Tibial artery (tissue), 4 donors: ENCODE measurements at regions of chr10 and their contacts with region 1.

Region 1: DNA sequence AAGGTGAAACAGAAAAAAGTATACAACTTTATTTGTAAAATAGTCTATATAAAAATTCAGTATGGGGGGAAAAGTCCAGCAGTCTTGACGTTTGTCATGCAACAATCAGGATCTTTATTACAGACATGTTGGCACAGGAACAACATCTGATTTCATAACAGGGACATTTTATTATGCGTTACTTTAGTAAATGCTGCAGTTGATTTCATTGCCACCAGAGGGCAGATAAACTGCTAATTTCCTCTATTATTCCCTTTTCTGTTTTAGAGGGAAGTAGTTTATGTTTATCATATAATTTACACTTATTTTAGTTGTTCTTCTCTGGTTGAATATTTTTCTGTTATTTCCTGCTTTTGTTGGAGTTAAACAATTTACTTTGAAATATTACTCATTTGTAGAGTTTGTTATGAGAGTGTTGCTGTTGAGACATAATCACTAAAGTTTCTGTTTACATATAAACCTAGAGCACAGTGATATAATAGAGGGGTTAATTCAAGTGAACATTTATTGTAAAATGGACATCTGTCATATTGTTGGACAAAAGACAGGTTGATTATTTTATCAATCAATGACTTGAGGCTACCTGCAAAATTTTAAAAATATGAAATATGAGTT is 3.3 kb downstream of the PLXDC2 start:
- DNase-seq: peak in 1 of 2 donors; percentile 59
- H3K4me3 ChIP-seq: peak overlapping the region; percentile 69 to 77
- H3K27ac ChIP-seq: peak overlapping the region; percentile 84 to 86
- H3K4me1 ChIP-seq: peaks cover 0 to 51% (median 3%) of the 10 kb centered on the region in 4 donors
- H3K27me3 ChIP-seq: no peaks in the 10 kb centered on the region
- CTCF ChIP-seq: peak; percentile 82 to 85

Region 2: GRCh38 chr10:19629567-19629966 is 190.0 kb before region 1 on chr10:
- intact Hi-C with region 1: loop called (anchors 10 kb)
- DNase-seq: peak; percentile 83 to 91
- H3K4me3 ChIP-seq: no peak overlapping the region
- H3K27ac ChIP-seq: peak overlapping the region; percentile 43 to 73
- H3K4me1 ChIP-seq: peaks cover 0 to 80% (median 9%) of the 10 kb centered on the region in 4 donors
- H3K27me3 ChIP-seq: no peaks in the 10 kb centered on the region
- CTCF ChIP-seq: peak in 1 of 2 experiments; percentile 27

Region 3: DNA sequence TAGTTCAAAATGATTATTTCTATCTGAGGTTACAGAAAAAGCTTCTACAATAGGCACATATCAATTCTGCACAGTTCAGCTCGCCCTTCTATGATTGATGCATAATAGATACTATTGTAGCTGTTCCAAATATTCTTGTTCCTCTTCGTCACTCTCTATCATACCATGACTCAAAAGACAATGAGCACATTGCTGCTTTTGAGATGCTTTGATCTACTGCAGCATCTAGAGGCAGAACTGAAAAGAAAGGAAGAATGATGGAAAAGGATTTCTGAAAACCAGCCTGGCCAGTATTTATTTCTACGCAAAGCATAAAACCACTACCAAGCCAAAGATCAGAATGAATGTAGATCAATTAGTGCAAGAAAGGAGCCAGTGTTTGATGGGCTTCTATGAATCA is 62.6 kb before region 1 on chr10:
- intact Hi-C with region 1: no loop called
- DNase-seq: no peak
- H3K4me3 ChIP-seq: no peak overlapping the region
- H3K27ac ChIP-seq: no peak overlapping the region
- H3K4me1 ChIP-seq: no peaks in the 10 kb centered on the region
- H3K27me3 ChIP-seq: no peaks in the 10 kb centered on the region
- CTCF ChIP-seq: no peak

Region 4: GRCh38 chr10:19922236-19922963 is 102.9 kb after region 1 on chr10:
- intact Hi-C with region 1: loop called (anchors 10 kb)
- DNase-seq: peak in 1 of 2 donors; percentile 74
- H3K4me3 ChIP-seq: peak overlapping the region; percentile 5 to 33
- H3K27ac ChIP-seq: peak overlapping the region; percentile 78 to 80
- H3K4me1 ChIP-seq: peaks cover 0 to 83% (median 74%) of the 10 kb centered on the region in 4 donors
- H3K27me3 ChIP-seq: no peaks in the 10 kb centered on the region
- CTCF ChIP-seq: no peak

Region 5: DNA sequence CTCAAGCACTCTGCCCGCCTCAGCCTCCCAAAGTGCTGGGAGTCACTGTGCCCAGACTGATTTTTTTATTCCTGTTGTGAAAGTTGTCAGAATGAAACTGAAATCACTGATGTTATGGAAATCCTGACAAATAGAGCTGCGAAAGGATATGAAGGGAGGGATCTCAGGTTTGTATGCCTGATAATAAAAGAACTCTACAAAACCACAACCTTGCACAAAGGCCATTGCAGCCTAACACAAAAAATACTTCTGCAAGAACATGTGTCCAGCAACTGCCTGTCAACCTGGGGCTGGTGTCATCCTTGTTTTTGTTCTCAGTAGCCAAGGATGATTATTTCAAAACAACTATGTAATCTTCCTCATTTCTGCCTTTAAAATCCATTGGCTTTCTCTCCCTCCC is 951.5 kb after region 1 on chr10:
- intact Hi-C with region 1: loop called (anchors 5 kb)
- DNase-seq: no peak
- H3K4me3 ChIP-seq: no peak overlapping the region
- H3K27ac ChIP-seq: no peak overlapping the region
- H3K4me1 ChIP-seq: peaks cover 0 to 26% (median 9%) of the 10 kb centered on the region in 4 donors
- H3K27me3 ChIP-seq: no peaks in the 10 kb centered on the region
- CTCF ChIP-seq: no peak